IMR-90 (cell line): ENCODE measurements at regions of chr7 and their contacts with region 1.

Region 1: DNA sequence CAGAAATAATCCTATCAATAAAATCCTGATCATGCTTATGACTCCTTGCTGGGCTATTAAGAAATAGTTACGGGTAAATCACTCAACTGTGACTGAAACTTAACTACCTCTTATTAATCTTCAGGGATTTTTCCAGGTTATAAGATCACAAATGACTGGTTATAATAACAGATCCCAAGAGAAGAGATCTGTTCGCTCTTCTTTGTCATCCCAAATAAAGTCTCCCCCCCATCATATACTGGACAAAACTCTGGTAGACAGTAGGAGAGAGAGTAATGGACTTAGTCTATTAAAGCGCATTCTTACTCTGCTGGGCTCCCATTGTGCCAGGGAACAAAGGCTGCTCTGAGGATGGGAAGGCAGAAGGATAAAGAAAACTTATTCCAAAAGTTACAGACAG is 233.8 kb downstream of the DGKI start:
- DNase-seq: no peak
- ATAC-seq: no peak
- H3K4me3 ChIP-seq: no peak overlapping the region
- H3K27ac ChIP-seq: no peak overlapping the region
- H3K4me1 ChIP-seq: no peaks in the 10 kb centered on the region
- H3K27me3 ChIP-seq: no peaks in the 10 kb centered on the region
- CTCF ChIP-seq: no peak
- POLR2A ChIP-seq: no peak
- RAD21 ChIP-seq: no peak

Region 2: DNA sequence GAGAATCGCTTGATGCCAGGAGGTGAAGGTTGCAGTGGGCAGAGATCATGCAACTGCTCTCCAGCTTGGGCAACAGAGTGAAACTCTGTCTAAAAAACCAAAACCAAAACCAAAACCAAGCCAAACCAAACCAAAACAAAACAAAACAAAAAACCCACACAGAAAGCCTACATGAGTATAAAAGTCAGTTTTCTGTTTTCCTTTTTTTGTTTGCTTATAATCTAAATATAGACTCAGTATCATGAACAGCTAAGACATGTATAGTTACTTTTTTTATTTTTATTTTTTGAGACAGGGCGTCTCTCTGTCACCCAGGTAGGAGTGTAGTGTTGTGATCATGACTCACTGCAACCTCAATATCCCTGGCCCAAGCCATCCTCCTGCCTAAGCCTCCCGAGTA is 1619.1 kb before region 1 on chr7:
- CTCF ChIA-PET with region 1: no interaction called
- POLR2A ChIA-PET with region 1: no interaction called
- dilution Hi-C with region 1: no loop called
- in situ Hi-C with region 1: no loop called
- intact Hi-C with region 1: no loop called
- DNase-seq: no peak
- ATAC-seq: no peak
- H3K4me3 ChIP-seq: no peak overlapping the region
- H3K27ac ChIP-seq: no peak overlapping the region
- H3K4me1 ChIP-seq: no peaks in the 10 kb centered on the region
- H3K27me3 ChIP-seq: no peaks in the 10 kb centered on the region
- CTCF ChIP-seq: no peak
- POLR2A ChIP-seq: no peak
- RAD21 ChIP-seq: no peak

Region 3: GRCh38 chr7:137564677-137565076 is 48.3 kb before region 1 on chr7:
- CTCF ChIA-PET with region 1: no interaction called
- POLR2A ChIA-PET with region 1: no interaction called
- dilution Hi-C with region 1: no loop called
- in situ Hi-C with region 1: no loop called
- intact Hi-C with region 1: no loop called
- DNase-seq: no peak
- ATAC-seq: no peak
- H3K4me3 ChIP-seq: no peak overlapping the region
- H3K27ac ChIP-seq: no peak overlapping the region
- H3K4me1 ChIP-seq: peaks cover 2% of the 10 kb centered on the region; the same call in 1 of the 2 replicates
- H3K27me3 ChIP-seq: no peaks in the 10 kb centered on the region
- CTCF ChIP-seq: no peak
- POLR2A ChIP-seq: no peak
- RAD21 ChIP-seq: no peak

Region 4: GRCh38 chr7:137850972-137851945 is 238.3 kb after region 1 on chr7:
- CTCF ChIA-PET with region 1: no interaction called
- POLR2A ChIA-PET with region 1: no interaction called
- dilution Hi-C with region 1: no loop called
- in situ Hi-C with region 1: no loop called
- intact Hi-C with region 1: no loop called
- DNase-seq: peak; percentile 58
- ATAC-seq: no peak
- H3K4me3 ChIP-seq: no peak overlapping the region
- H3K27ac ChIP-seq: no peak overlapping the region
- H3K4me1 ChIP-seq: peaks cover 13% of the 10 kb centered on the region; the same call in 1 of the 2 replicates
- H3K27me3 ChIP-seq: no peaks in the 10 kb centered on the region; the same call in 1 of the 2 replicates
- CTCF ChIP-seq: no peak
- POLR2A ChIP-seq: no peak
- RAD21 ChIP-seq: no peak

Region 5: GRCh38 chr7:138014686-138015085 is 401.7 kb after region 1 on chr7:
- CTCF ChIA-PET with region 1: no interaction called
- POLR2A ChIA-PET with region 1: no interaction called
- dilution Hi-C with region 1: loop called (anchors 25 kb)
- in situ Hi-C with region 1: loop called (anchors 5 kb)
- intact Hi-C with region 1: no loop called
- DNase-seq: no peak
- ATAC-seq: no peak
- H3K4me3 ChIP-seq: no peak overlapping the region
- H3K27ac ChIP-seq: no peak overlapping the region
- H3K4me1 ChIP-seq: no peaks in the 10 kb centered on the region
- H3K27me3 ChIP-seq: peaks cover 24% of the 10 kb centered on the region
- CTCF ChIP-seq: no peak
- POLR2A ChIP-seq: no peak
- RAD21 ChIP-seq: no peak